ENCODE measurements at regions of chr4 and their contacts with region 1.

Region 1: DNA sequence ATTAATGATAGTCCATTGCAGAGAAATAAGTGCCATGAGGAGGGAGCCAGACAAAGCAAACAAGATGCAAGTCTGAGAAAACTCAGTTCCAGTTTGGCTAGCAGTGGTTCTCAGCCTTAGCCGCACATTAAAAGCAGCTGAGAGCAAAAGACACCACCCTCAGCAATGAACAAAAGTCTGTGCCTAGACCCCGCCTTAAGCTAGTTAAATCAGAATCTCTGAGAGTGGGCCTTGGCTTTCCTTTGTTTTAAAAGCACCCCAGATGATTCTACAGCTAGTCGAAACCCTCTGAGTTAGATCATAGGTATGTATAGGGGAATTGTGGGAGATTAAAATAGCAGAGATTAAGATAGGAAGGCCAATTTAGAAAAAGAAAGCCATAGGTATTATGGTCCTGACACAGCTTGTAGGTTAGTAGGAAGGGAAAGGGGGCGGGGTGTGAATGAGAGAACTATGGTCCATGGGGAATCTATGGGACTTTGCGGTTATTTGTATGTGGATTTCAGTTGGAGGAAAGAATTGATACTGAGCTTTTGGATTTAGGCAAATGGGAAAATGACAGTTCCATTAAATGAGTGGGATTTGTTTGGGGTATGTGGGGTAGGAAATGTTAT is 12.0 kb downstream of the SPRY1 start:
- DNase-seq: no peak
- H3K4me3 ChIP-seq: no peak overlapping the region
- H3K27ac ChIP-seq: no peak overlapping the region
- H3K27me3 ChIP-seq: no peaks in the 10 kb centered on the region
- CTCF ChIP-seq: no peak

Region 2: DNA sequence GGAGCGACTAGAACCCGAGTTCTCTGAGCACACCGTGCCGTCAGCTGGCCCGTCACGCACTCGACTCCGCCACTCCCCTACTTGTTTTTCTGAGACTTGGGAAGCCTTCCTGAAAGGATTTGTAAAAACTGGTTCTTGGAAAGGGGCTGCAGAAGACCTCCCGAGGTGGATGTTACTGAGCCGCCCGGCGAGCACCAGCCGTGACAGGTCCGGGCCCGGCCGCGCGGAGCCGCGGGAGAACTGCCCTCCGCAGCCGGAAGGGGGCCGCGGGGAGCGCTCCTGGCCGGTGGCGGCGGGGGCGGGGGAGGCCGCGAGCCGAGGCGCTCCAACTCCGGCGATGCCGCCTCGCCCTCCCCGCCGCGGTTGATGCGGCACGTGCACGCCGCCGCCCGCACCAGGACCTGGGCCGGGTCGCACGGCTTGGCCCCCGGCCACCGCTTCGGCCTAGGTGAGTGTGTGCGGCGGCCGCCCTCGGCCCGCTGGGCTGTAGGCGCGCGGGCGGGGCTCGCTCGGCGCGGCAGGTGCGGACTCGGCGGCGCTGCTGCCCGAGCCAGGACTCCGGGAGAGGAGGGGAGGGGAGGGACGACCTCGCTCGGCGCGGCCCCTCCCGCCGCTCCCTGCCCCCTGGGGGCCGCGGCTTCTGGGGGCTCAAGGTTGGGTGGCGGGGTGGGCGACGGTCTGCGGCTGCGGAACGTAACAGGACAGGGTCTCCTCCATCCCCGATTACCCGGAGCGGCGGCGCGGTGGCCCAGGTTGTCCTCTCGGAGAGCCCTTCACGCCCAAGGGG is 10.3 kb before region 1 on chr4:
- CTCF ChIA-PET with region 1: interaction called, 10 read pairs
- POLR2A ChIA-PET with region 1: no interaction called
- DNase-seq: no peak
- H3K4me3 ChIP-seq: peak overlapping the region; percentile 78
- H3K27ac ChIP-seq: peak overlapping the region; percentile 43
- H3K27me3 ChIP-seq: no peaks in the 10 kb centered on the region
- CTCF ChIP-seq: peak; percentile 41; the same call in 1 of the 2 replicates